Gastrocnemius medialis (tissue), 4 donors: ENCODE measurements at regions of chr2 and their contacts with region 1.

Region 1: DNA sequence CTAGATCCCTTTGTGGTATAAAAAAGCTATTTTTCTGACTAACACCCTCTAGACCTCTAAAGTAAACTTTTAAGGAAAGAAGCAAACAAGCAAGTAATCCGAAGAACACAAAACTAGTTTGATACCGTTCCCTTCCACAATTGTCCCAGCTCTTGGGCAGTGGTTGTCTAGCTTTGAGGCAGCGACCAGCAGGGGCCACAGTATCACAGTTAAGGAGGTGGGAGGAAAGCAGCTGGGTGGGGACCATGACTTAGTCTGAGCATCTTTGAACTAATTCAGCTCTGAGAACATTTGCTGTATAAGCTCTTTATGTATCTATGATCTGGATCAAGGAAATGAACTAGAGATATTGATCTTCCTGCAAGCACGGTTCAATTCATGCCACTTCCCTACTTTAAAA is 51.0 kb downstream of the SF3B1 start:
- DNase-seq: no peak
- ATAC-seq: no peak
- H3K4me3 ChIP-seq: no peak overlapping the region
- H3K27ac ChIP-seq: no peak overlapping the region
- H3K4me1 ChIP-seq: no peaks in the 10 kb centered on the region
- H3K27me3 ChIP-seq: no peaks in the 10 kb centered on the region
- CTCF ChIP-seq: no peak
- POLR2A ChIP-seq: no peak

Region 2: DNA sequence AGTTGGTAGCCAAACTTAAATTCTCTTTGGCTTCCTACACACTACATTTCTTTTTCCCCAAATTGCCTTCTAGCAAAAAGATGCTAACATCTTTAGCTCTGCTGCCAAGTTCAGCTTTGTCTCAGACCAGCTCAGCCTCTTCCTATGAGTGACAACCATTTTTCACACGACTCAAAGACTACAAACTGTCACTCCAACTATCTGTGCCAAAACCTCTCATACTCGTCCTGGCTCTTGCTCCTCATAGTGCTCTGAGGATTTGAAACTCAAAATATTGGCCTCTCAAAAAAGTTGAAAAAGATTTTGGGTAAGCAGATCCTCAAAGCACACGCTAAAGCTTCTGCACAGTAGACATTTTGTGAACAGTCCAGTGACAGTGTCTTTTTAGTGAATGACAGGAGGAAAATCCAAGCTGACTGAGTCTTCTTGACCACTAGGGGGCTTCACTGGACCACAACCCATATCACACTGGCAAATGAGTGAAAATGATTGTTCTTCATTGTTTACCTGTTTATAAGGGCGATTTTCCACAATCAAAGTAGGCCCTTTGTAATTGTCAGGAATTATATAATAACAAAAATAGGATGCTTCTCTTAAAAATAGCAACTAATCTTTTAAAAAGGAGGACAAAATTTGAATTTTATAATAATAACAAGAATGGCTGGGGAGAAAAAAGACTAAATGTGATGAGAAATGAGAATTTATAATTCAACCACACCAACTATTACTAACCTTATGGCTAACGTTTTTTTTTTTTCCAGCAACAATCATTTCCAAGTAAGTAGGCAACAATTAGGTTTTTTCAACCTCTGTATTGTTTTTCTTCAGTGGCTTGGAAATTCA is 371.8 kb before region 1 on chr2:
- in situ Hi-C with region 1: loop called in 2 of 4 experiments (anchors 10 kb)
- intact Hi-C with region 1: loop called (anchors 5 kb)
- DNase-seq: no peak
- ATAC-seq: peak; percentile 56 to 75
- H3K4me3 ChIP-seq: no peak overlapping the region
- H3K27ac ChIP-seq: no peak overlapping the region
- H3K4me1 ChIP-seq: peaks cover 0 to 3% of the 10 kb centered on the region in 2 donors
- H3K27me3 ChIP-seq: no peaks in the 10 kb centered on the region
- CTCF ChIP-seq: peak; percentile 58 to 77 (median 64)
- POLR2A ChIP-seq: no peak

Region 3: DNA sequence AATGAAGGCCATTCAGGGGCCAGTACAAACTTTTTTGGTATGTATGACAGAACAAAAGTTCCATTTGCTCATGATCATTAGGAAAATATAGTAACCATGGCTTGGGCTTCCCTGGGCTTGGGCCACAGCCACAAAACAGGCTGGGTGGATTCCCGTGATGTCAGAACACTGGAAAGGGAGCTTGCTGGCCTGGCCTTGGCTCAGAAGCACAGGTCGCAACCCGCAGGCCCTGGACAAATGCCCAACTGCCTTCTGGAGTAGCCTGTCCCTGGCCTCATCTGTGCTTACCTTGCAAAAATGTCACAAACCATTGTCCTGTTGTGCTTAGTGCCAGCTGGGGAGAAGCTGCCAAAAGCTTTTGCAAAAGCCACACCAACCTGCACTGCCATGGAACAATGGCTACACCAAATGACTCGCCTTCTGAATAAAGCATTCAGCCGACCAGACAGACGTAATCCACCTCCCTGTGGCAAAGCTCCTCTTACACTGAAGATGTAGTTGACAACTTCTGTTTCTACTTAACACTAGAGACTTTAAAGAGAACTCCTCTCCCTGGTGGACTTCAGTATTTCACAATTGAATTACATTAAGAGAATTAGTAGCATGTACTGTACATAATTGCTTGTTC is 198.8 kb before region 1 on chr2:
- in situ Hi-C with region 1: loop called (anchors 5 to 10 kb)
- intact Hi-C with region 1: no loop called
- DNase-seq: peak; percentile 83 to 94
- ATAC-seq: peak; percentile 92 to 93
- H3K4me3 ChIP-seq: no peak overlapping the region
- H3K27ac ChIP-seq: peak overlapping the region; percentile 64 to 74 (median 73)
- H3K4me1 ChIP-seq: peaks cover 18 to 24% of the 10 kb centered on the region in 2 donors
- H3K27me3 ChIP-seq: no peaks in the 10 kb centered on the region
- CTCF ChIP-seq: no peak
- POLR2A ChIP-seq: no peak

Region 4: DNA sequence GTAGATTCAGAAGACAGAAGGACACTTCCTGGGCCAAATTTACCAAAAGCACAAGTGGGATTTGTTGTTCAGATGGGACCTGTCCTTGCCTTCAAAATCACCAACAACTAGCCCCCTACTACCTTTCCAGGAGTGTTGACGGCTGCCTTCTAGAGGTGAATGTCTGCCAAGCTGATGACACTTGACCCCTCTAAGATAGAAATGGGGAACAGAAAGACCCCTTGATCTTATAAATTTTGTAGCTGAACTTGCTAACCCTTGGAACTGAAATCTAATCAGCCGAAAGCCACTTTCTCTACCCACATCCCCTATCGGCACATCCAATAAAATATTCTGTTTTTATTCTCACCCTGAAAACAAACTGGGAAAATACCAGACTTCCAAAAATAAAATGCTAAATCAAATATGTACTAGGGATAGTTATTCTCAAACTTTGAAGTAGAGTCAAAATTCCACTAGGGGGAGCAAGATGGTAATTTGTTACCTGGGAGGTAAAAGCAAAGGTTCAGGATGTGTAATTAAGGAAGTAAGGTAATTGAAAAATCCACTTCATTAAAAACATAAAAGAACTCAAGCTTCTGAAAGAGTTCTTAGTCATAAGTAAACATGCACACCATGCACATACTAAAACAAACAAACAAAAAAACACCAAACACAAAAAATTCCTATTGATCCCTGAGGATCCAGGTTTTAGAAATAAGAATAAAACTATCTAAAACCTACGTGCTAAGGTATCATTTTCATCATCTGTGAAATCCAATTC is 192.5 kb before region 1 on chr2:
- in situ Hi-C with region 1: loop called (anchors 5 to 10 kb)
- intact Hi-C with region 1: no loop called
- DNase-seq: no peak
- ATAC-seq: peak; percentile 49 to 56
- H3K4me3 ChIP-seq: no peak overlapping the region
- H3K27ac ChIP-seq: no peak overlapping the region
- H3K4me1 ChIP-seq: peaks cover 8 to 12% of the 10 kb centered on the region in 2 donors
- H3K27me3 ChIP-seq: no peaks in the 10 kb centered on the region
- CTCF ChIP-seq: peak; percentile 61 to 82 (median 65)
- POLR2A ChIP-seq: no peak